Endothelial cell of umbilical vein (primary cell): ENCODE measurements at regions of chr4 and their contacts with region 1.

Region 1: DNA sequence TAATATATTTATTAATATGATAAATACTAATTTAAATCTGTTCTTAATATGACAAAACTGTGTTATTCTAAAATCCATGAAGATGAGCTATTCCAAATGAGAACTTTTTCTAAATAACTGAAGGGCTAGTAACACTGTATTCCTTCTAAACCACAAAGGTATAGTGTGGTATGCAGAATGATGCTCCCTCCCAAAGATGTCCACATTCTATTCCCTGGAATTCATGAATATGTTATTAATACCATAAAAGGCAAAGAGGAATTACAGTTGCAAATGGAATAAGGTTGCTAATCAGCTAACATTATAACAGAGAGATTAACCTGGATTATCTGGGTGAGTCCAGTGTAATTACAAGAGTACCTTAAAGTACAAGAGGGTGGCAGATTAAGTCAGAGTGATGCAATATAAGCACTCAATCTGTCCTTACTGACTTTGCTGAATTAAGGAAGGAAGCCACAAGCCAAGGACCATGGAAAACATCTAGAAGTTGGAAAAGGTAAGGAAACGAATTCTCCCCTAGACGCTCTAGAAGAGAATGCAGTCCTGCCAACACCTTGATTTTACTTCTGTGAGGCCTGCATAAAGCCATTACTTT is 20.7 kb upstream of the MAB21L2 start:
- DNase-seq: no peak
- H3K4me3 ChIP-seq: no peak overlapping the region
- H3K27ac ChIP-seq: no peak overlapping the region
- H3K4me1 ChIP-seq: no peaks in the 10 kb centered on the region
- H3K27me3 ChIP-seq: no peaks in the 10 kb centered on the region
- CTCF ChIP-seq: no peak
- POLR2A ChIP-seq: no peak

Region 2: DNA sequence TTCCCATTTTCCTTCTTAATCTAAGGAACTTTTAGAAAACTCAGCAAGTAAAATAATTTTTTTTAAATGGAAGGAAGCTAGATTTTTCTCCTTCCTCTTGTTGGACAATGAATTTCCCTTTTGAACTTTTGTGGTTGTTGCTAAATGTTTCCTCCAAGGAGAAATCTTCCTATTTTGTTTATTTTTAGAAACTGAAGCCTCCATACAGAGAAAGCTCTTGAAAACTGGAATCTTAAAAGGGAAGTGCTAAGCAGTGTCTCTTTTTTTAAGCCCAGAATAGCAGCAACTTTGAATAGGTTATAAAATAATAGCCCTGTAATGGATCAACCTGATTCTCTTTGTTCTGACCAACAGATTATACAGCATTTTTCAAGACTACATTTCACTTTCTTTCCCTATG is 498.1 kb before region 1 on chr4:
- CTCF ChIA-PET with region 1: no interaction called
- POLR2A ChIA-PET with region 1: no interaction called
- dilution Hi-C with region 1: no loop called
- intact Hi-C with region 1: no loop called
- DNase-seq: no peak
- H3K4me3 ChIP-seq: no peak overlapping the region
- H3K27ac ChIP-seq: no peak overlapping the region
- H3K4me1 ChIP-seq: no peaks in the 10 kb centered on the region
- H3K27me3 ChIP-seq: no peaks in the 10 kb centered on the region
- CTCF ChIP-seq: no peak
- POLR2A ChIP-seq: no peak

Region 3: GRCh38 chr4:150402871-150403272 is 158.4 kb before region 1 on chr4:
- CTCF ChIA-PET with region 1: no interaction called
- POLR2A ChIA-PET with region 1: no interaction called
- dilution Hi-C with region 1: no loop called
- intact Hi-C with region 1: no loop called
- DNase-seq: peak; percentile 39
- H3K4me3 ChIP-seq: no peak overlapping the region
- H3K27ac ChIP-seq: no peak overlapping the region
- H3K4me1 ChIP-seq: no peaks in the 10 kb centered on the region
- H3K27me3 ChIP-seq: no peaks in the 10 kb centered on the region
- CTCF ChIP-seq: no peak
- POLR2A ChIP-seq: no peak

Region 4: DNA sequence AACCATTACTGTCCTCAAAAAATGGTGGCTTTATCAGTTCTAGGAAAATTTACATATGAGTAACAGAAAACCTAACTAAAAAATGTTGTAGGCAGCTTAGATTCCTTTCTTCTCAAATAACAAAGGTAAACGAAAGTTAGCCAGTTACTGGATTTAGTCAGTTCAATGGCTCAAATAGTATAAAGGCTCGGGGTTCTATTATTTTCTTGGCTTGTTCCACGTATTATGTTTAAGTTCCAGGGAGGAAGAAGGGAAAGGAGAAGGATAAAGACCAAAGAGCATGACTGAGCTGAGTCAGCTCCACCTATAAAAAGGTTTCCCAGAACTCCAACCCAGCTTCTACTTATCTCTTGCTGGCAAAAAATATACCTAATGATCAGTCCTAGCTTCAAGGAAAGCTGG is 20.3 kb before region 1 on chr4:
- CTCF ChIA-PET with region 1: interaction called, 11 read pairs
- POLR2A ChIA-PET with region 1: no interaction called
- dilution Hi-C with region 1: no loop called
- intact Hi-C with region 1: no loop called
- DNase-seq: no peak
- H3K4me3 ChIP-seq: no peak overlapping the region
- H3K27ac ChIP-seq: no peak overlapping the region
- H3K4me1 ChIP-seq: no peaks in the 10 kb centered on the region
- H3K27me3 ChIP-seq: no peaks in the 10 kb centered on the region
- CTCF ChIP-seq: no peak
- POLR2A ChIP-seq: no peak

Region 5: DNA sequence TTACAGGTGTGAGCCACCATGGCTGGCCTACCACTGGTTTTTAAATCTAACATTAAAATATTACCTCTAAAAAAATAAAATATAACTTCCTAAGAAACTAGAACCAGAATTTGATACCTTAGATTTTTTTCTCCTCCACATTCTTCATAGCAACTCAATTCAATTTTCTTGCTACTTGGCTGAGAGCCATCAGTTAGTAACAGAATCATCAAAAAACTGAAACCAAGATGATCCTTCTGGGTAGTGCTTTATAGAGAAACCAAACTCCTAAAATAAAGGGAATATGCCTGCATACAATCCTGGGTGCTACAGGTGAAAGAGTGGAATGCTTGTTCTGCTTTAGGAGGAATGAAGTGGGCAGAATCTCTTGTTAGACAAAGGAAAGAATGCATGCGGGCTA is 602.6 kb after region 1 on chr4:
- CTCF ChIA-PET with region 1: no interaction called
- POLR2A ChIA-PET with region 1: no interaction called
- dilution Hi-C with region 1: no loop called
- intact Hi-C with region 1: no loop called
- DNase-seq: no peak
- H3K4me3 ChIP-seq: no peak overlapping the region
- H3K27ac ChIP-seq: no peak overlapping the region
- H3K4me1 ChIP-seq: peaks cover 3% of the 10 kb centered on the region
- H3K27me3 ChIP-seq: no peaks in the 10 kb centered on the region
- CTCF ChIP-seq: no peak
- POLR2A ChIP-seq: no peak